Mammary epithelial cell (primary cell): ENCODE measurements at regions of chr5 and their contacts with region 1.

Region 1: DNA sequence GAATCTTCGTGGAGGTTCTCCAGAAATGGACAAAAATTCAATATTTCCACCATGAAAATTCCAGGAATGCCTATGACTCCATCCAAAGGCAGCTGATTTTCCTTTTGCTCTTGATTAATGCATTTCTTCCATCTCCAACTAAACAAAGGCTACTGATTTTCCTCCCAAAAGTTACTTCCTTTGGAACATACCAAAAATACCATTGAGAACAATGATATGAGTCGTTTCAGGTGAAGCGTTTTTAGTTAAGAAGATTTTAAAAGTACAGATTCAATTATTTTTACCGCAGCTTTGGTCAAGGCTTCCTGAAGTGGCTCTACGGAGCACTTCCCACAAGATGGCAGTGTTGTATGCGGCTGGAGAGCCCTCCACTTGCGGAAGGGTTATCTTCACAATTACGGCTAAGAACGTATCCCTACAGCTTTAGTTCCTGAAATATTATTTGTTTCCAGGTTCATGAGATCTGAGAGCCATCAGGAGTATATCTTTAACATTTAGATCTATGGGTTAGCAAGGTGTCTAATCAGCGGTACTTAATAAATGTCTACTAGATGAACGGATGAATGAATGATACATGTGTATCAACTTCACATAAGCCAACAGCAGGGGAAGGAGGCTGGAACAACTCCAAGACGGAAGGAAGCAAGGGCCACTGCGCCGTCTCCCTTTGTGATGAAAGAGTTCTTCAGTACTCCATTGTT is 35.9 kb upstream of the ARSB start:
- DNase-seq: peak; percentile 39
- H3K4me3 ChIP-seq: peak overlapping the region in 2 of 3 experiments; percentile 22 to 31
- H3K27ac ChIP-seq: no peak overlapping the region
- H3K4me1 ChIP-seq: peaks cover 15% of the 10 kb centered on the region
- H3K27me3 ChIP-seq: peaks cover 4% of the 10 kb centered on the region
- CTCF ChIP-seq: peak; percentile 86 to 88

Region 2: DNA sequence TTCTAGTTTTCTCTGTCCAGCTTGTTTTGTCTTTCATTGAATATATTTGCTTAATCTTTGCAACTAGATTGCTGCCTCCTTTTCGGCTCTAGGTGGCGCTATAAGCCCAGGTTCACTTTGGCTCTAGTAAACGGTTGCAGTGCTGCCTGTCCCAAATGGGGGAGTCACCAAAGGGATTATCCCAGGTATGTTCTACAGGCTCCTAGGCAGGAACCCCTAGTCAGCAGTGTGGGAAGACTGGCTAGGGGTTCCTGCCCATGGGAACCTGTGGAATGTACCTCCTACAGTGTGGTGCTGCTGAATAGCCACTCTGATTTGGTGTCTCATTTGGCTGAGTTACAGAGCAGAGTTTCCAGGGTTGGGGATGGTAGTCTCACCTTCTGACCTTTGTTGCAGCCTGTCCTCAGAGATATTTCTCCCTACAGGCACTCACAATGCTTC is 121.1 kb before region 1 on chr5:
- CTCF ChIA-PET with region 1: no interaction called
- dilution Hi-C with region 1: no loop called
- in situ Hi-C with region 1: no loop called
- intact Hi-C with region 1: loop called (anchors 1 kb)
- DNase-seq: peak; percentile 44
- H3K4me3 ChIP-seq: no peak overlapping the region
- H3K27ac ChIP-seq: no peak overlapping the region
- H3K4me1 ChIP-seq: no peaks in the 10 kb centered on the region
- H3K27me3 ChIP-seq: no peaks in the 10 kb centered on the region
- CTCF ChIP-seq: peak; percentile 79 to 83

Region 3: DNA sequence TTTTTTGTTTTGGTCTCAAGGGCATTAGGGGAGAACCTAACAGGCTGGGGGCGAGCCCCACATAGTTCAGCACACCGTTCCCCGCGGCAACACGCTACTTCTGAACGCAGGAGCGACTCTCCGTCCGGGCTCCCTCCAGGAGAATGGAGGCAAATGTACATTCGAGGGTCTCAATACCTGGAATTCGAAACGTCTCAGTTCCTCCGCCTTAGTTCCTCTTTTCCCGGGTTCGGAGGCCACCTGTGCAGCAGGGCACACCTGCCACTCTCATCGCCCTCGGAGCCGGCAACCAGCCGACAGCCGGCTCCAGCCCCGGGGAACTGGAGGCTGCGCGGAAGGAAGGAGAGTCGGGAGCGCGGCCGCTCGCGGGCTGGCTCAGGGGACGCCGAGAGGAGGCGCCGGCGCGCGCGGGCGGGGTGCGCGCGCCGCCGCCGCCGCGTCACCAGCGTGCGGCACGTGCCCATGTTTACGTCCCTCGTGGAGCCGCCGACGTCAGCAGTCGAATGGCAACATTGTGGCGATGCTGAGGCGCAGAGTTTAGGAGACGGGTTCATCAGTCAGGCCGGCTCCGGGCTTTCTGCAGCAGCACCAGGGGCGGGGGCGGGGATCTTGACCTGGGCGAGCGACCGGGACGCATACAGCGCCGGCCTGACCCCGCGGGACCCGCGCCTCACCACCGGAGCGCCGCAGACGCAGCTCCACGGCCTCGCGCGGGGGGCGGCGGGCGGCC is 214.8 kb after region 1 on chr5 and contains the start of gene JMY:
- CTCF ChIA-PET with region 1: no interaction called
- dilution Hi-C with region 1: no loop called
- in situ Hi-C with region 1: no loop called
- intact Hi-C with region 1: loop called (anchors 5 kb)
- DNase-seq: peak; percentile 80
- H3K4me3 ChIP-seq: peak within 1 kb of the TSS; percentile 68 to 90 (median 87)
- H3K27ac ChIP-seq: peak within 1 kb of the TSS; percentile 76
- H3K4me1 ChIP-seq: no peaks in the 10 kb centered on the region
- H3K27me3 ChIP-seq: no peaks in the 10 kb centered on the region
- CTCF ChIP-seq: no peak
- total RNA-seq, gene JMY: 7.5 to 16.8 TPM

Region 4: DNA sequence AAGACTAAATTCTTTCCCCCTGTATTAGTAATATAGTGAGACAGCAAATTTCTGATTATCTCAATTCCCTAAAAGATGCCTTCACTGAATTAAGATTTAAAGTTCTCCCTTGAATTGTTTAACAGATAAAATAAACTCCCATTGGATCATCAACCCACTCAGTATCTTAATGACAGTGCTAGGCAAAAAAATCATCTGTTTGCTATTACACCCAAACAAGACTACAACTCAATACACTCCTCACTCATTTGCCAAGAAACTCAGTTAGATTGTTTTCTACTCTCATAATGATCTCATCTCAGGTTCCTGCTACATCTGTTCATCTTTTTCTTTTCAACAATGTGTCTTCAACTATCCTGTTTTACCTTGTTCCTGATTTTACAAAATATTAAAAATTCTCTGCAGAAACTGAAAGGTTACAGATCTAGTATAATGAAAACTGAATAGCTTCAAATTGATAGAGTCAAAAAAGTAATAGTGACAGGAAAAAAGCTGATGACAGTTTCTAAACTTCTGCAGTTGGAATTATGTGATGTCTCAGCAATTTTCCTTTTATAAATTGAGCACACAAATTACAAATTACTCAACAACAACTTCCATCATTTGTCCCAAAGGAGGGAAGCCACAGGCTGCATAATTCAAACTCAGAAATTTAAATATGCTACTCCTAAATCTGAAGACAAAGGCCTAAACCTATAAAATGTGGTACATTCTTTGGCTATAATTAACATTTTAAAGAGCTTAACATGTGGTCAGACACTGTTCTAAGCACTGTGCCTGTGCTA is 453.5 kb after region 1 on chr5:
- CTCF ChIA-PET with region 1: no interaction called
- dilution Hi-C with region 1: no loop called
- in situ Hi-C with region 1: loop called (anchors 10 kb)
- intact Hi-C with region 1: no loop called
- DNase-seq: no peak
- H3K4me3 ChIP-seq: no peak overlapping the region
- H3K27ac ChIP-seq: no peak overlapping the region
- H3K4me1 ChIP-seq: no peaks in the 10 kb centered on the region
- H3K27me3 ChIP-seq: no peaks in the 10 kb centered on the region
- CTCF ChIP-seq: no peak

Region 5: DNA sequence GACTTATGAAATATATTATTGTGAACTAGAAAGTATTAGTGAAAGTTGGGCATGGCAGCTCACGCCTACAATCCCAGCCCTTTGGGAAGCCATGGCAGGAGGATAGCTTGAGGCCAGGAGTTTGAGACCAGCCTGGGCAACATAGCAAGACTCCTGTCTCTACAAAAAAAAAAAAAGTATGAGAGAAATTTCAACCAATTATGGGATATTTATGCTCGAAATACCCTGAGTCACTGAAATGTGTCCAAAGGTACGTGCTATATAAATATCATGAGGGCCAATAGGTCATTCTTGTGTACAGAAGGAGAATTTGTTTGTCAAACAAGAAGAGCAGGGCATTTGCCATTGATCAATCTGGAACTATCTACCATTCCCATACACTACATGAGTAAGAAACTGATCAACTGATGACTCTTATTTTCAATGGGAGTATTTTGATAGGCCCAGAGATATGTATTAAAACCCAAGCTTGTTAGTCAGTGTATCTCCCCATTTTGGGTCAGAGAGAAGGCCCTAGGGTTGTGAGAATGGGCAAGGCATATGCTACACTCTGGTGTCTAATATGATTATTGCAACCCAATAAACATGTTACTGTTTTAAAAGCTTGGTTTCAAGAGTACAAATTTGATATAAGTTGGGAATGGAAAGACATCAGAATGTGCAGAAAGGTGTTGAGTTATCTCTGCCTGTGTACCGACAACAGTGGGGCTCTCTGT is 514.6 kb after region 1 on chr5:
- CTCF ChIA-PET with region 1: interaction called, 3 read pairs
- dilution Hi-C with region 1: no loop called
- in situ Hi-C with region 1: no loop called
- intact Hi-C with region 1: loop called (anchors 2 kb)
- DNase-seq: no peak
- H3K4me3 ChIP-seq: no peak overlapping the region
- H3K27ac ChIP-seq: no peak overlapping the region
- H3K4me1 ChIP-seq: no peaks in the 10 kb centered on the region
- H3K27me3 ChIP-seq: no peaks in the 10 kb centered on the region
- CTCF ChIP-seq: peak in 1 of 2 donors; percentile 34

Region 6: DNA sequence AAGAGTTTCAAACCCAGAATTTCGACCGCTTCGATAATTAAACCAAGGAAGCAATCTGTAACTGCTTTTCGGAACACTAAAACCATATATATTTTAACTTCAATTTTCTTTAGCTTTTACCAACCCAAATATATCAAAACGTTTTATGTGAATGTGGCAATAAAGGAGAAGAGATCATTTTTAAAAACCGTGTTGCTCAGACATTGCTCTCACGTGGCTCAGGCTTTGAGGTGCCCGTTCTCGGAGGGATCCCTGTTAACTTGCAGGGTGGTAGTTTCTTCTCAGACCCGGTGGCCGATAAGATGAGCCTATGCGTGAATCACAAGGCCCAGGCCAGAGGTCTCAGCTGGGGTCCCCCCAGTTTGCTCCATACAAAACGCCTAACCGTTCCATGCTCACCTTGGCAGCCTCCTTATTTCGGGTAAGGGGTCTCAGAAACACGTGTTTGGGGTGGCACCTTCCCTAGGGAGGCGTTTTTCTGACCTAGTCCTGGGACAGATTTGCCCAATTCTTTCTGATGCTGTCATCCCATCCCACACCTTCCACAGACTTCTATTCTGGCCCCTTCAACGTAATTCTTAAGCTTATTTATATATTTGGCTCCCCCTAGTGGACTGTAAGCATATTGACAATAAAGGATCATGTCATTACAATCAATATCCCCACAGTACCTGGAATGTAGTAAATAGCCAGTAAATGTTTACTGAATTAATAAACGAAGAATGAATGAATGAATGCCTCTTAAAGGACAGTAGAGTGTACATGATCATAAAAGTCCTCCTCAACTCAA is 1062.3 kb after region 1 on chr5:
- CTCF ChIA-PET with region 1: interaction called, 5 read pairs
- dilution Hi-C with region 1: no loop called
- in situ Hi-C with region 1: loop called in 1 of 2 experiments (anchors 25 kb)
- intact Hi-C with region 1: loop called (anchors 2 kb)
- DNase-seq: peak; percentile 52
- H3K4me3 ChIP-seq: peak overlapping the region in 2 of 3 experiments; percentile 1 to 14
- H3K27ac ChIP-seq: no peak overlapping the region
- H3K4me1 ChIP-seq: no peaks in the 10 kb centered on the region
- H3K27me3 ChIP-seq: no peaks in the 10 kb centered on the region
- CTCF ChIP-seq: peak; percentile 61 to 64